ENCODE measurements at regions of chr6 and their contacts with region 1.

Region 1: DNA sequence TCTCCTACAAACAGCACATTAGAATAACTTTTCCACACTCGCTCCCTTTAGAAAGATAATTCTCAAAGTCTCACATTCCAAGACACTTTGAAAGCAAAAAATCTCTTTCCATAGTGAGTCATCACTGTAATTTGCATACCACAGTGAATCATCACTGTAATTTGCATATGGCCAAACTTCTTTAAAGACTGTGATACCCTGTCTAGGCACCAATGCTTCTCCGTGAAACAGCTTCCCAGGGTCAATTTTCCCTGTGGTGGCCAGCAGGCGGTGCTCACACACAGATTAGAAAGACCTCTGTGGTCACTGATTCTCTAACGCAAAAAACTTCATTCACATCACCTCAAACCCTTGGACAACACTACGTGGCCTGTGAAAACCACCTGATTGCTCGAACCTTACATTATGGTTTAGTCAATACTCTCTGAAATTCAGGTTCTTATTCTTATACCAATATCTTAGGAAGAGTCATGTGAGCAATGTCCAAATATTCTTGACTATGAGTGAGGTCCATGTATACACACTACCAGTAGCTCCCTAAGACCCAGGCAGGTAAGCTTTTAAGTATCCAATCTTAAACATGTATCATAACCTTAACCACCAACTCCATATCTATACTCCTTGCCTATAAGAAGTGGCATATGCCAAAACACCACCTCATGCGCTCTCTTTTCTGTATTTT is 78.5 kb upstream of the PHACTR1 start:
- DNase-seq: no peak
- H3K4me3 ChIP-seq: no peak overlapping the region
- H3K27ac ChIP-seq: no peak overlapping the region
- H3K4me1 ChIP-seq: no peaks in the 10 kb centered on the region
- H3K27me3 ChIP-seq: peaks cover 0 to 10% (median 0%) of the 10 kb centered on the region in 7 donors
- CTCF ChIP-seq: peak in 10 of 11 experiments; percentile 5 to 66 (median 54)
- POLR2A ChIP-seq: no peak

Region 2: GRCh38 chr6:12890171-12890790 is 252.2 kb after region 1 on chr6:
- intact Hi-C with region 1: loop called (anchors 5 kb)
- DNase-seq: no peak
- H3K4me3 ChIP-seq: no peak overlapping the region
- H3K27ac ChIP-seq: no peak overlapping the region
- H3K4me1 ChIP-seq: peaks cover 0 to 7% (median 0%) of the 10 kb centered on the region in 6 donors
- H3K27me3 ChIP-seq: peaks cover 0 to 9% (median 0%) of the 10 kb centered on the region in 7 donors
- CTCF ChIP-seq: peak in 6 of 11 experiments; percentile 22 to 67 (median 54)
- POLR2A ChIP-seq: no peak

Measured in spleen (tissue), 13 donors.